PC-9 (cell line): ENCODE measurements at regions of chr15 and their contacts with region 1.

Region 1: GRCh38 chr15:45842151-45842550 is 207.3 kb downstream of the SQOR start:
- DNase-seq: no peak
- H3K4me3 ChIP-seq: no peak overlapping the region
- H3K27ac ChIP-seq: no peak overlapping the region
- H3K4me1 ChIP-seq: no peaks in the 10 kb centered on the region
- H3K27me3 ChIP-seq: no peaks in the 10 kb centered on the region
- CTCF ChIP-seq: no peak

Region 2: DNA sequence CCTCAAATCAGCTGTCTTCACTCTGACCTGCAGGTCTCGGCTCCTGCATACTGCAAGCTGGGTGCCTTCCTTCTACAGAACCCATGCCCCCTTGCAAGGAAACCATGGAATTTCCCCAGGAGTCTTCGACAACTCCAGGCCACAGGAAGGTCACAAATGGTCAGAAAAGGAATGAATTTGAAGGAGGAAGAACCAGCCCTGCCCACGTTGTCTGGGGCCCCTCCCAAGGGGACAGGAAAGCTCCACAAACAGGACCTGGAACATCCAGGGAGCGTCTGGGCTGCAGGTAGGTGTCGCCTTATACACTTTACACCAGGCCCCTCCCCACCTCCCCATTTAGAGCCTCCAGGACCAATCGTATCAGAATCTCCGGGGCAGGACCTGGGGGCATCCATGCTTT is 393.6 kb before region 1 on chr15:
- CTCF ChIA-PET with region 1: no interaction called
- POLR2A ChIA-PET with region 1: interaction called, 13 read pairs
- intact Hi-C with region 1: no loop called
- DNase-seq: peak; percentile 61 to 69
- H3K4me3 ChIP-seq: peak overlapping the region; percentile 10; the same call in 1 of the 2 replicates
- H3K27ac ChIP-seq: peak overlapping the region; percentile 92
- H3K4me1 ChIP-seq: peaks cover 61% of the 10 kb centered on the region
- H3K27me3 ChIP-seq: no peaks in the 10 kb centered on the region
- CTCF ChIP-seq: no peak